Gastrocnemius medialis (tissue), 4 donors: ENCODE measurements at regions of chr5 and their contacts with region 1.

Region 1: DNA sequence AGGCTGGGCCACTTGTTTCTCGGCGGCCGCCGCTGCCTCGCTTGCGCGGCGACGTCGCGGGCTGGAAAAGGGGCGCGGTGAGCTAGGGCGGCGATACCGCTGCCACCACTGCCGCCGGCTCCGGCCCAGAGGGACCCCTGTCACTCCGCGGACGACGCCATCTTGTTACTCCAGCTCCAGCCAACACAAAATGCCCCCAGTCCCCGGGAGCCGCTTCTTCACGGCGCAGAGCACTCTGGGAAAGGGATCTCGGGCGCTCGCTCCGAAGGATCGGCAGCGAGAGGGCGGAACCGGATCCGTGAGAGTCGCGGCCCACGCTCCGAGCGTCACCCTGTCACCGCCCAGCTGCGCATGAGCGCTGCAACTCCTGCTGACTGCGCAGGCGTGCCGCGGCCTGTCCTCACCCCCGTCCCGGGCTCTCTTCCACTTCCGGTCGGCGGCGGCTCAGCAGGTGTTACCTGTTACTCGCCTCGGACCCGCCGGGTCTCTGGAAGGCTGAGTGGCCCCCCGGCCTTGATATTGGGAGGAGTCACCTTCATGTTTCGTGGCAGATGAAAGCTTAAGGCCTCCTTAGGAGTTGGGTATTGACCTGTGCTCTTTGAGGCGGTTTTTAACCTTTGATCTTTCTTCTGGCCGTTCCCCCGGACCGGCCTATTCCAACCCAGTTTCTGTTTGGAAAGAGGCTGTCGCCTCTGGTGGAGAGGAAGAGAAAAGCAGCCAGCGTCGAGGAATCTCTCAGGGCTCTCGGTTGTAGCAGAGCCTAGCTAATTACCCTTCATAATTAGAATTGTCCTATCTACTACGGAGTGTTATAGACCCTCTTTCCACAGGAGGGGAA is at the start of gene CSNK1A1:
- DNase-seq: peak; percentile 96 to 98
- ATAC-seq: peak; percentile 84 to 86
- H3K4me3 ChIP-seq: peak within 1 kb of the TSS; percentile 85 to 99 (median 96)
- H3K27ac ChIP-seq: peak within 1 kb of the TSS; percentile 99 to 100 (median 99)
- H3K4me1 ChIP-seq: peaks cover 35 to 37% of the 10 kb centered on the region in 2 donors
- H3K27me3 ChIP-seq: no peaks in the 10 kb centered on the region
- CTCF ChIP-seq: peak; percentile 81 to 97 (median 92)
- POLR2A ChIP-seq: peak; percentile 98
- total RNA-seq, gene CSNK1A1: 157 to 252 (median 215) TPM

Region 2: DNA sequence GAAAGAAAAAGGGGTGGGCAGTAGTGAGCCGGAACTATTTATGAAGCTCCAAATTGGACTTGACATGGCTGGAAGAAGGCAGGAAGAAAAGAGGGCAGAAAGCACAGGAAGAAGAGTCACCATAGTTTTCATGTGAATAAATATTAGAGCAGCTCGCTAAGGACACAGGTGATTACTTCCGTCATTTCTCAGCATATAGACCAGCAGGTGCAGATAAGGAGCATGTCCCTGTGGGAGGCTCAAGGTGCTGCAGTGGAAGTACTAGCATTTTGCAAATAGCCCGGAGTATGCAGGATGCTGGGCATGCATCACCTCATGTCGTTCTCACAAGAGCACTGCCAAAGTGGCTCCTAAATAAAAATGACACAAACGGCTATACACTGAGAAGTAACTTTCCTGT is 825.7 kb before region 1 on chr5:
- in situ Hi-C with region 1: no loop called
- intact Hi-C with region 1: no loop called
- DNase-seq: no peak
- ATAC-seq: no peak
- H3K4me3 ChIP-seq: no peak overlapping the region
- H3K27ac ChIP-seq: no peak overlapping the region
- H3K4me1 ChIP-seq: no peaks in the 10 kb centered on the region
- H3K27me3 ChIP-seq: no peaks in the 10 kb centered on the region
- CTCF ChIP-seq: no peak
- POLR2A ChIP-seq: no peak

Region 3: GRCh38 chr5:149141224-149141956 is 410.0 kb before region 1 on chr5 and contains the start of gene ABLIM3:
- in situ Hi-C with region 1: loop called in 1 of 4 experiments (anchors 25 kb)
- intact Hi-C with region 1: no loop called
- DNase-seq: peak; percentile 43 to 72
- ATAC-seq: peak; percentile 73 to 82
- H3K4me3 ChIP-seq: peak within 1 kb of the TSS; percentile 87 to 93 (median 91)
- H3K27ac ChIP-seq: peak within 1 kb of the TSS; percentile 86 to 91 (median 88)
- H3K4me1 ChIP-seq: peaks cover 26% of the 10 kb centered on the region in 2 donors
- H3K27me3 ChIP-seq: no peaks in the 10 kb centered on the region
- CTCF ChIP-seq: peak; percentile 85 to 96 (median 96)
- POLR2A ChIP-seq: peak; percentile 36 to 53
- total RNA-seq, gene ABLIM3: 37.5 to 155 (median 67.7) TPM

Region 4: GRCh38 chr5:149268928-149269557 is 282.4 kb before region 1 on chr5:
- in situ Hi-C with region 1: no loop called
- intact Hi-C with region 1: loop called (anchors 10 kb)
- DNase-seq: no peak
- ATAC-seq: no peak
- H3K4me3 ChIP-seq: no peak overlapping the region
- H3K27ac ChIP-seq: no peak overlapping the region
- H3K4me1 ChIP-seq: peaks cover 12 to 20% of the 10 kb centered on the region in 2 donors
- H3K27me3 ChIP-seq: no peaks in the 10 kb centered on the region
- CTCF ChIP-seq: peak; percentile 70 to 88 (median 75)
- POLR2A ChIP-seq: no peak

Region 5: GRCh38 chr5:149442563-149443182 is 108.7 kb before region 1 on chr5:
- in situ Hi-C with region 1: loop called in 2 of 4 experiments (anchors 5 kb)
- intact Hi-C with region 1: loop called (anchors 1 kb)
- DNase-seq: peak; percentile 62 to 80
- ATAC-seq: peak; percentile 77 to 88
- H3K4me3 ChIP-seq: no peak overlapping the region
- H3K27ac ChIP-seq: peak overlapping the region; percentile 29 to 85 (median 78)
- H3K4me1 ChIP-seq: peaks cover 5 to 17% of the 10 kb centered on the region in 2 donors
- H3K27me3 ChIP-seq: no peaks in the 10 kb centered on the region
- CTCF ChIP-seq: peak; percentile 90 to 97 (median 95)
- POLR2A ChIP-seq: no peak

Region 6: GRCh38 chr5:149485655-149486425 is 65.6 kb before region 1 on chr5:
- in situ Hi-C with region 1: no loop called
- intact Hi-C with region 1: loop called (anchors 1 kb)
- DNase-seq: peak; percentile 91 to 94
- ATAC-seq: peak; percentile 88 to 90
- H3K4me3 ChIP-seq: no peak overlapping the region
- H3K27ac ChIP-seq: peak overlapping the region; percentile 84 to 87 (median 85)
- H3K4me1 ChIP-seq: peaks cover 57 to 63% of the 10 kb centered on the region in 2 donors
- H3K27me3 ChIP-seq: no peaks in the 10 kb centered on the region
- CTCF ChIP-seq: no peak
- POLR2A ChIP-seq: peak in 1 of 2 donors; percentile 12